B cell (primary cell): ENCODE measurements at regions of chr12 and their contacts with region 1.

Region 1: GRCh38 chr12:131928711-131929580 is at the start of gene PUS1:
- DNase-seq: peak; percentile 96
- ATAC-seq: peak; percentile 82
- H3K4me3 ChIP-seq: peak within 1 kb of the TSS; percentile 33 to 94 (median 86)
- H3K4me3 Mint-ChIP-seq: peak within 1 kb of the TSS; percentile 95
- H3K27ac ChIP-seq: peak within 1 kb of the TSS; percentile 55 to 85
- H3K27ac Mint-ChIP-seq: peak within 1 kb of the TSS; percentile 98
- H3K4me1 ChIP-seq: peaks cover 27 to 44% of the 10 kb centered on the region in 2 donors
- H3K4me1 Mint-ChIP-seq: peaks cover 33% of the 10 kb centered on the region
- H3K27me3 ChIP-seq: no peaks in the 10 kb centered on the region
- H3K27me3 Mint-ChIP-seq: no peaks in the 10 kb centered on the region
- CTCF ChIP-seq: no peak
- total RNA-seq, gene PUS1: 50.1 and 51.3 TPM in 2 replicates

Region 2: DNA sequence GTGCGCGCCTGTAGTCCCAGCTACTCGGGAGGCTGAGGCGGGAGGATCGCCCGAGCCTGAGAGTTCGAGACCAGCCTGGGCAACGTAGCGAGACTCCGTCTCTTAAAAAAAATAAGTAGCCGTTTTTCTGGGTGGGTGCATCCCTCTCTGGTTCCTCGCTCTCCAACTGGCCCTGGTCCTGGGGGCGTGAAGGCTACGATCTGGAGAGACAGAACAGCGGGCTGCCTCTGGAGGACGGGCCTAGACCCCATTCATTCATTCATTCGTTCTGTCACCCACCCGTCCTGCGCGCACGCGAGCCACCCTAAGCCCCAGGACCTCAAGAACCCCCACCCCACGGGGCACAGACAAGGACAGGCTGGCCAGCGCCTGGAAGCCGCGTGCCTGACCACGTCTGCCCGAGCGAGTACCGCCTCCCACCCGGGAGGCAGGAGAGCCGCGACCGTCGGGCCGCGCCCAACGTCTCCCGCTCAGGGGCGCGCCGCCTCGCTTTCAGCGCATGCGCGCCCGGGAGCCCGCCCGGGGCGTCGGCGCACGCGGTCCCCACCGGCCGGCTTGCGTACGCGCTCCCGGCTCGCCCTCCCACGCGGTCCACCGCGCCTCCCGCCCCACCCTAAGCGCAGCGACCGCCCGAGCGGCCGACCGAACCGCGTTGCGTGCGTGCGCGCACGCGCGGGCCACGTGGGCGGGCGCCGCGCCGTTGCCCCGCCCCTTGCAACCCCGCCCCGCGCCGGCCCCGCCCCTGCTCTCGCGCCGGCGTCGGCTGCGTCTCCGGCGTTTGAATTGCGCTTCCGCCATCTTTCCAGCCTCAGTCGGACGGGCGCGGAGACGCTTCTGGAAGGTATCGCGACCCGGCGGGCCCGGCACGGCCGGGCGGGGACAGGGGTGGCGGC is 1057.4 kb before region 1 on chr12 and contains the start of gene RAN:
- CTCF ChIA-PET with region 1: no interaction called
- POLR2A ChIA-PET with region 1: no interaction called
- intact Hi-C with region 1: loop called (anchors 10 kb)
- DNase-seq: peak; percentile 97
- ATAC-seq: peak; percentile 77
- H3K4me3 ChIP-seq: peak within 1 kb of the TSS; percentile 70 to 81 (median 73)
- H3K4me3 Mint-ChIP-seq: peak within 1 kb of the TSS; percentile 96
- H3K27ac ChIP-seq: peak within 1 kb of the TSS; percentile 78 to 84
- H3K27ac Mint-ChIP-seq: peak within 1 kb of the TSS; percentile 92
- H3K4me1 ChIP-seq: peaks cover 23 to 26% of the 10 kb centered on the region in 2 donors
- H3K4me1 Mint-ChIP-seq: peaks cover 35% of the 10 kb centered on the region
- H3K27me3 ChIP-seq: no peaks in the 10 kb centered on the region
- H3K27me3 Mint-ChIP-seq: no peaks in the 10 kb centered on the region
- CTCF ChIP-seq: no peak
- total RNA-seq, gene RAN: 289 and 298 TPM in 2 replicates

Region 3: GRCh38 chr12:131536337-131536736 is 392.6 kb before region 1 on chr12:
- CTCF ChIA-PET with region 1: no interaction called
- POLR2A ChIA-PET with region 1: no interaction called
- intact Hi-C with region 1: no loop called
- DNase-seq: no peak
- ATAC-seq: no peak
- H3K4me3 ChIP-seq: no peak overlapping the region
- H3K4me3 Mint-ChIP-seq: no peak overlapping the region
- H3K27ac ChIP-seq: no peak overlapping the region
- H3K27ac Mint-ChIP-seq: no peak overlapping the region
- H3K4me1 ChIP-seq: no peaks in the 10 kb centered on the region
- H3K4me1 Mint-ChIP-seq: no peaks in the 10 kb centered on the region
- H3K27me3 ChIP-seq: peaks cover 0 to 5% (median 3%) of the 10 kb centered on the region in 4 experiments
- H3K27me3 Mint-ChIP-seq: peaks cover 15% of the 10 kb centered on the region
- CTCF ChIP-seq: no peak

Region 4: DNA sequence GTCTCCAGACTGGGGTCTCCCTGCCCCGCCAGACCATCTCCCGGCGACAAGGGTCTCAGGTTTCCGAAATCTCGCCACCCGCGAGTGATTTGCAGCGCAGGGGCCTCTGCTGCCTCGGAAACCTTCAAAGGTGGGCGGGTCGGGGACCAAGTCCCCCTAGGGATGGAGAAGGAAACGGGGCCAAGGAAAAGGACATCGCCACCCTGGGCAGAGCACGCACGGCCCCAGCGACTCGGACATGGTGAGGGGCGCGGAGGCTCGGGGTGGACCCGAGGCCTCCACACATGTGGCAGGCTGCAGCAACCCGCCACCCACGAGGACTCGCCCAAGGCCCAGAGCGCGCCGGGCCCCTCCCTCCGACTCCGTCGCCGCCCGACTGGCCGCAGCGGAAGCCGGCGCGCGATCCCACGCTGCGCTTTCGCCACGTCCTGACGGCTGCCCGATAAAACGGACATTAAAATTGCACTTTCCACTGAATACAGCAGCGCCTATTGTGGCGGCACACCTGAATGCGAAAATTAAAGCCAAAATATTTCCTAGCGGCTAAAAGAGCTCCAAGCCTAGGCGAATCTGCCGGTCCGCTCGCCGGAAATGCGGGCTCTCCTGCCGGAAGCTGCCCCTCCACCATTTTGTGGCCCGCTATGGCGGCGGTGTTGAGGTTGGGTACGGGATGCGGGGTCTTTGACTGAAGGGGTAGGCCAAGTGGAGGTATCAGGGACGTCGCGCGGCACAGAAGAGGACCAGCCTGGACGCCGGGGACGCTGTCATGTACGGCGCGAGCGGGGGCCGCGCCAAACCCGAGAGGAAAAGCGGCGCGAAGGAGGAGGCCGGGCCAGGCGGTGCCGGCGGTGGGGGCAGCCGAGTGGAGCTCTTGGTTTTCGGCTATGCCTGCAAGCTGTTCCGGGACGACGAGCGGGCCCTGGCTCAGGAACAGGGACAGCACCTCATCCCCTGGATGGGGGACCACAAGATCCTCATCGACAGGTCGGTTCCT is 218.2 kb before region 1 on chr12 and contains the start of gene SFSWAP:
- CTCF ChIA-PET with region 1: no interaction called
- POLR2A ChIA-PET with region 1: interaction called, 13 read pairs
- intact Hi-C with region 1: no loop called
- DNase-seq: peak; percentile 92
- ATAC-seq: peak; percentile 95
- H3K4me3 ChIP-seq: peak within 1 kb of the TSS; percentile 83 to 100 (median 96)
- H3K4me3 Mint-ChIP-seq: peak within 1 kb of the TSS; percentile 98
- H3K27ac ChIP-seq: peak within 1 kb of the TSS; percentile 93 to 99
- H3K27ac Mint-ChIP-seq: peak within 1 kb of the TSS; percentile 99
- H3K4me1 ChIP-seq: peaks cover 16 to 22% of the 10 kb centered on the region in 2 donors
- H3K4me1 Mint-ChIP-seq: peaks cover 30% of the 10 kb centered on the region
- H3K27me3 ChIP-seq: no peaks in the 10 kb centered on the region
- H3K27me3 Mint-ChIP-seq: no peaks in the 10 kb centered on the region
- CTCF ChIP-seq: no peak
- total RNA-seq, gene SFSWAP: 122 and 135 TPM in 2 replicates

Region 5: DNA sequence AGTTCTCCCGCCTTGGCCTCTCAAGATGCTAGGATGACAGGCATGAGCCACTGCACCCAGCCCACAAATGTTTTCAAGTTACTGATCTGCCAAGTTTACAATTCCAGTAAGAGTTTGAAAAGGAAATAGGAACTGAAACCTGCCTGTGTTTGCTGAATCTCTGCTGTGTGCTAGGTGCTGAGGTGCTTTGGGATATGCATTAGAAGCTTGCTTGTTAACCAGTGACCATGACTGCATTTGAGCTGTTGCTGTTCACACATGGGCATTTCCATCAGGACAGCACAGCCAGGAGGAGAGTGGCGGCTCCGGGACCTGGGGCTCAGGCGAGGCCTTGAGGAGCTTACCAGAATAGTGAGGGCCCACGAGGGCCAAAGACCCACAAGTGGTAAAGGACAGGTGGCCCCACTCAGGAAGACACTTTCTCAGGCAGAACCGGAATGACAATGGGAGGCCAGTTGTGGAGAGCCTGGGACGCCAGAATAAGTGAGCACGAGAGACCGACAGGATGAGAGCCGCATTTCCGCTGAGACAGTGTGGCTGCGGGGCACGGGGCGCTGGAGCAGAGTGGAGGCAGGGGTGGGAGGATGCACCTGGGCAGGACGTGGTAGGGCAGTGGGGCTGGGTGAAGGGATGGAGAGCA is 155.2 kb before region 1 on chr12:
- CTCF ChIA-PET with region 1: interaction called, 3 read pairs
- POLR2A ChIA-PET with region 1: no interaction called
- intact Hi-C with region 1: loop called (anchors 10 kb)
- DNase-seq: peak; percentile 76
- ATAC-seq: peak; percentile 74
- H3K4me3 ChIP-seq: peak overlapping the region in 4 of 5 experiments; percentile 30 to 60 (median 50)
- H3K4me3 Mint-ChIP-seq: peak overlapping the region; percentile 91
- H3K27ac ChIP-seq: peak overlapping the region; percentile 93 to 97
- H3K27ac Mint-ChIP-seq: peak overlapping the region; percentile 97
- H3K4me1 ChIP-seq: peaks cover 62 to 68% of the 10 kb centered on the region in 2 donors
- H3K4me1 Mint-ChIP-seq: peaks cover 78% of the 10 kb centered on the region
- H3K27me3 ChIP-seq: no peaks in the 10 kb centered on the region
- H3K27me3 Mint-ChIP-seq: no peaks in the 10 kb centered on the region
- CTCF ChIP-seq: no peak

Region 6: GRCh38 chr12:131894313-131894860 is 34.6 kb before region 1 on chr12 and contains the start of gene ULK1:
- CTCF ChIA-PET with region 1: no interaction called
- POLR2A ChIA-PET with region 1: interaction called, 7 read pairs
- intact Hi-C with region 1: loop called (anchors 1 kb)
- DNase-seq: peak; percentile 91
- ATAC-seq: peak; percentile 80
- H3K4me3 ChIP-seq: peak within 1 kb of the TSS; percentile 49 to 74 (median 59)
- H3K4me3 Mint-ChIP-seq: peak within 1 kb of the TSS; percentile 91
- H3K27ac ChIP-seq: peak within 1 kb of the TSS; percentile 6 to 69
- H3K27ac Mint-ChIP-seq: peak within 1 kb of the TSS; percentile 88
- H3K4me1 ChIP-seq: peaks cover 18 to 23% of the 10 kb centered on the region in 2 donors
- H3K4me1 Mint-ChIP-seq: peaks cover 21% of the 10 kb centered on the region
- H3K27me3 ChIP-seq: no peaks in the 10 kb centered on the region
- H3K27me3 Mint-ChIP-seq: peaks cover 4% of the 10 kb centered on the region
- CTCF ChIP-seq: no peak
- total RNA-seq, gene ULK1: 59.5 and 83.3 TPM in 2 replicates

Region 7: DNA sequence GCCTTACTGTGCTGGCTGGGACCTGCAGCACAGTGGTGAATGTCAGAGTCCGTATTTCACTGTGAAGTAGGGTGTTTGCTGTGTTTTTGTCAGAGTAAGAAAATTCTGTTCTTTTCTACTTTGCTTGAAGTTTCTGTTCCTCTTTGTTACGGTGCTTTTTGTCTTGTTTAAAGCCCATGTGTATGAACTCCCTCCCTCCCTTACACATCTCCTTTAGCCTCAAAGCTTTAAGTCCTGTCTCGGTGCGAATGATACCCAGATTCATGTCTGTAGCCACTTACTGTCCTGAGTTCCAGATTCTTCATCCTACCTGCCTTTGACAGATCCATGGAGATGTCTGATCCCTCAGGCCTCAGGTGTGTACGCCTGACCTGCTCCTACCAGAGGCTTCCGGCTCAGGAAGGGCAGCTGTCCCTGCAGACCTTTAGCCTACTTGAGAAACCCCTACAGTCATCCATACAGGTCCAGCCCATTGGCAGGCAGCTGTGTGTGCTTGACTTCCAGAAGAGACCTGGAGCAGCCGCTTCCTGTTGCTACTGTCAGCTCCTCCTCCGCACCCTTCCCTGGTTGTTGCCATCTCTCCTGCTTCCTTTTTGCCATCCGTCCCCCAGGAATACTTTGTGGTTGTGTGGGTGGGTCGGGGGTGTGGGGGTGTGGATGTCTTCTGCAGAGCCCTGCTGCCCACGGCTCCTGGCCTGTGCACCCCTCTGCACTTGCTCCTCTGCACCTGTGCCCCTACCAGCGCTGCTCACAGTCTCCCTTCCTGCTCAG is 142.3 kb after region 1 on chr12:
- CTCF ChIA-PET with region 1: no interaction called
- POLR2A ChIA-PET with region 1: no interaction called
- intact Hi-C with region 1: loop called (anchors 10 kb)
- DNase-seq: peak; percentile 78
- ATAC-seq: peak; percentile 78
- H3K4me3 ChIP-seq: peak overlapping the region in 4 of 5 experiments; percentile 41 to 62 (median 57)
- H3K4me3 Mint-ChIP-seq: peak overlapping the region; percentile 80
- H3K27ac ChIP-seq: peak overlapping the region; percentile 74 to 80
- H3K27ac Mint-ChIP-seq: peak overlapping the region; percentile 93
- H3K4me1 ChIP-seq: peaks cover 75 to 83% of the 10 kb centered on the region in 2 donors
- H3K4me1 Mint-ChIP-seq: peaks cover 77% of the 10 kb centered on the region
- H3K27me3 ChIP-seq: no peaks in the 10 kb centered on the region
- H3K27me3 Mint-ChIP-seq: no peaks in the 10 kb centered on the region
- CTCF ChIP-seq: no peak

Region 8: DNA sequence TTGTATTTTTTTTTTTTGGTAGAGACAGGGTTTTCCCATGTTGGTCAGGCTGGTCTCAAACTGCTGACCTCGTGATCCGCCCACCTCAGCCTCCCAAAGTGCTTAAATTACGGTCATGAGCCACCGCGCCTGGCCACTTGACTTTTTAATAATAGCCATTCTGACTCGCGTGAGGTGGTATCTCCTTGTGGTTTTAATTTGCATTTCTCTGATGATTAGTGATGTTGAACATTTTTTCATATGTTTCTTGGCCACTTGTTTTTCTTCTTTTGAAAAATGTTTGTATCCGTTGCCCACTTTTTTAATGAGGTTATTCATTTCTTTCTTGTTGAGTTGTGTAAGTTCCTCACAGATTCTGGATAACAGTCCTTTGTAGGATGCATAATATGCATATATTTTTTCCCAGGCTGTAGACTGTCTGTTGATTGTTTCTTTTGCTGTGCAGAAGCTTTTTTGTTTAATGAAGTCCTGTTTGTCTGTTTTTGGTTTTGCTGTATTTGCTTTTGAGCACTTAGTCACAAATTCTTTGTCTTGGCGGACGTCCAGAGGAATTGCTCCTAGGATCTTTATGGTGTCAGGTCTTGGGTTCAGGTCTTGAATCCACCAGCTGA is 771.4 kb after region 1 on chr12:
- CTCF ChIA-PET with region 1: no interaction called
- POLR2A ChIA-PET with region 1: interaction called, 12 read pairs
- intact Hi-C with region 1: no loop called
- DNase-seq: peak; percentile 35
- ATAC-seq: peak; percentile 24
- H3K4me3 ChIP-seq: no peak overlapping the region
- H3K4me3 Mint-ChIP-seq: peak overlapping the region; percentile 35
- H3K27ac ChIP-seq: no peak overlapping the region
- H3K27ac Mint-ChIP-seq: peak overlapping the region; percentile 0
- H3K4me1 ChIP-seq: peaks cover 6 to 11% of the 10 kb centered on the region in 2 donors
- H3K4me1 Mint-ChIP-seq: peaks cover 19% of the 10 kb centered on the region
- H3K27me3 ChIP-seq: no peaks in the 10 kb centered on the region
- H3K27me3 Mint-ChIP-seq: no peaks in the 10 kb centered on the region
- CTCF ChIP-seq: no peak